T-cell (primary cell): ENCODE measurements at regions of chr13 and their contacts with region 1.

Region 1: DNA sequence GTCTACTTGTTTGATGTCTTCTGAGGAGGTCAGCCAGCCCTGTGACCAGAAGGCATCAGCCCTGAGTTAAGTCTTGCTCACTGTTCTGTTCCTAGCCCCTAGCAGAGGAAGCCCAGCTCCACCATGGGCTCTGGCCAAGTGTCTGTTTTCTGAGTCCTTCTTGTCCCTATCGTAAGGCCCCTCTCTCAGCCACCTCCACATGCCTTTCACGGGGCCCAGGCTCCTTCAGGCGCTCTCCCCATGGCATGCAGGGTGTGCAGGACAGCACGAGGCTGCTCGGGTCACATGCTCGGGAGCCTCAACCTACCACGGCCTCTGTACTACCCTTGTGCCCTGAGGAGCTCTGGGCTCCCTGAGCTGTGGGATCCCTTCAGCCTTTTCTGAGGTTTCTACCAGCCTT is 47.8 kb upstream of the LATS2 start:
- DNase-seq: no peak
- ATAC-seq: no peak
- H3K4me3 ChIP-seq: no peak overlapping the region
- H3K4me3 Mint-ChIP-seq: no peak overlapping the region
- H3K27ac ChIP-seq: no peak overlapping the region
- H3K27ac Mint-ChIP-seq: no peak overlapping the region
- H3K4me1 ChIP-seq: peaks cover 0 to 3% of the 10 kb centered on the region in 2 experiments
- H3K4me1 Mint-ChIP-seq: peaks cover 0 to 2% (median 2%) of the 10 kb centered on the region in 3 donors
- H3K27me3 ChIP-seq: no peaks in the 10 kb centered on the region
- H3K27me3 Mint-ChIP-seq: no peaks in the 10 kb centered on the region

Region 2: GRCh38 chr13:19952850-19953249 is 1156.3 kb before region 1 on chr13:
- CTCF ChIA-PET with region 1: interaction called in 1 of 2 experiments, 10 read pairs
- POLR2A ChIA-PET with region 1: no interaction called
- DNase-seq: no peak
- ATAC-seq: no peak
- H3K4me3 ChIP-seq: no peak overlapping the region
- H3K4me3 Mint-ChIP-seq: no peak overlapping the region
- H3K27ac ChIP-seq: no peak overlapping the region
- H3K27ac Mint-ChIP-seq: no peak overlapping the region
- H3K4me1 ChIP-seq: peaks cover 0 to 6% of the 10 kb centered on the region in 2 experiments
- H3K4me1 Mint-ChIP-seq: peaks cover 0 to 3% (median 0%) of the 10 kb centered on the region in 3 donors
- H3K27me3 ChIP-seq: no peaks in the 10 kb centered on the region
- H3K27me3 Mint-ChIP-seq: no peaks in the 10 kb centered on the region

Region 3: DNA sequence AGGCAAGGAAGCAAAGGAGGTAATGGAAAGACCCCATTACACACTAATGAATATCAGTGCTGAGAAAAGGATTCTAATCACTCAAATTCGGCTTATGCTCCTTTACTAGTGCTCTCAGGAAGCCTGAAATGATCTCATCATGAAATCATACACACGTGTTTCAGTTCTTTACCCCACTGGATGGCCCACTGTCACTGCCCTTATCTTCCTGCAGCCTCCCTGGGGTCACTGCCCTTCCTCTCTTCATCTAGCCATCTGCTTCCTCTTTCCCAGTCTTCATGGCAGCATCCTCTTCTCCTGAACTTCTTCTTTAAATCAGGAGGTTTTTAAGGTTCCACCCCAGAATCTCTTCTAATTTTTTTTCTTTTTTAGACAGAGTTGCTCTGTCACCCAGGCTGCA is 307.5 kb before region 1 on chr13:
- CTCF ChIA-PET with region 1: no interaction called
- POLR2A ChIA-PET with region 1: no interaction called
- DNase-seq: no peak
- ATAC-seq: no peak
- H3K4me3 ChIP-seq: no peak overlapping the region
- H3K4me3 Mint-ChIP-seq: no peak overlapping the region
- H3K27ac ChIP-seq: no peak overlapping the region
- H3K27ac Mint-ChIP-seq: peak overlapping the region; percentile 11 to 68
- H3K4me1 ChIP-seq: peaks cover 0 to 2% of the 10 kb centered on the region in 2 experiments
- H3K4me1 Mint-ChIP-seq: peaks cover 16 to 24% (median 19%) of the 10 kb centered on the region in 3 donors
- H3K27me3 ChIP-seq: no peaks in the 10 kb centered on the region
- H3K27me3 Mint-ChIP-seq: no peaks in the 10 kb centered on the region